ENCODE measurements at regions of chr1 and their contacts with region 1.

Region 1: GRCh38 chr1:171485375-171486047 is at the start of gene PRRC2C:
- DNase-seq: peak; percentile 96
- H3K4me3 Mint-ChIP-seq: peak within 1 kb of the TSS; percentile 83
- H3K27ac Mint-ChIP-seq: peak within 1 kb of the TSS; percentile 93
- H3K4me1 Mint-ChIP-seq: peaks cover 43% of the 10 kb centered on the region
- H3K27me3 Mint-ChIP-seq: no peaks in the 10 kb centered on the region
- total RNA-seq, gene PRRC2C: 191 to 205 TPM

Region 2: GRCh38 chr1:170531758-170532657 is 953.5 kb before region 1 on chr1 and contains the start of gene GORAB:
- CTCF ChIA-PET with region 1: no interaction called
- POLR2A ChIA-PET with region 1: no interaction called
- intact Hi-C with region 1: loop called (anchors 10 kb)
- DNase-seq: peak; percentile 93
- H3K4me3 Mint-ChIP-seq: no peak within 1 kb of the TSS
- H3K27ac Mint-ChIP-seq: no peak within 1 kb of the TSS
- H3K4me1 Mint-ChIP-seq: peaks cover 15% of the 10 kb centered on the region
- H3K27me3 Mint-ChIP-seq: no peaks in the 10 kb centered on the region
- total RNA-seq, gene GORAB: 8.5 to 9.0 TPM

Region 3: GRCh38 chr1:171422511-171422910 is 63.0 kb before region 1 on chr1:
- CTCF ChIA-PET with region 1: interaction called, 4 read pairs
- POLR2A ChIA-PET with region 1: no interaction called
- intact Hi-C with region 1: loop called (anchors 5 kb)
- DNase-seq: no peak
- H3K4me3 Mint-ChIP-seq: no peak overlapping the region
- H3K27ac Mint-ChIP-seq: no peak overlapping the region
- H3K4me1 Mint-ChIP-seq: peaks cover 31% of the 10 kb centered on the region
- H3K27me3 Mint-ChIP-seq: no peaks in the 10 kb centered on the region

Region 4: DNA sequence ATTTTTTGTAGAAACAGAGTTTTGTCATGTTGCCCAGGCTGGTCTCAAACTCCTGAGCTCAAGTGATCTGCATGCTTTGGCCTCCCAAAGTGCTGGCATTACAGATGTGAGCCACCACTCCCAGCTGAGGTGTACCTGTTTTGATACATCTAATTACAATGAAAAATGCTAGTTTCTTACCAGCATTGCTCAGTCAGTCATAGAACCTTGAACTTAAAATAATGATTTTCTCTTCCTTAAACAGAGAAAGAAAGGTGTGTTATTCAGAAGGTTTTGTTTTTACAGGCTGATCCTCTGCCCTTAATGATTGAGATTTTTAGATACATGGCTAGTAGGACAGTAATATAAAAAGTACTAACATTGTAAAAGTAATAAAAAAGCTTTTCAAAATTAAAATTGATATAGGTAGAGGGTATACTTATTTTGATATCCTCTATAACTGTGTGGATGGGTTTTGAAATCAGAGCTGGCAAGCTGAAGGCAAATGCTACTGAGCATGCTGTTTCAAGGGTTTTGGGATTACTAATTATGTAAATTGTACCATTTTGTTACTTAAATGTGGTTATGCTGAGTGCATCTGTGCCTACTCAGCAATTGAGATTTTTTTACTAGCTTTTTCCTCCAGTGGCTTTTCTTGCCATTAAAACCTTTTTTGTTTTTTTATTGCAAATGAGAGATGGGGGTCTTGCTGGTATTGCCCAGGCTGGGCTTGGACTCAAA is 16.0 kb after region 1 on chr1:
- CTCF ChIA-PET with region 1: interaction called, 39 read pairs
- POLR2A ChIA-PET with region 1: interaction called, 24 read pairs
- intact Hi-C with region 1: loop called (anchors 1 kb)
- DNase-seq: peak; percentile 25
- H3K4me3 Mint-ChIP-seq: no peak overlapping the region
- H3K27ac Mint-ChIP-seq: peak overlapping the region; percentile 85
- H3K4me1 Mint-ChIP-seq: peaks cover 89% of the 10 kb centered on the region
- H3K27me3 Mint-ChIP-seq: no peaks in the 10 kb centered on the region

Region 5: DNA sequence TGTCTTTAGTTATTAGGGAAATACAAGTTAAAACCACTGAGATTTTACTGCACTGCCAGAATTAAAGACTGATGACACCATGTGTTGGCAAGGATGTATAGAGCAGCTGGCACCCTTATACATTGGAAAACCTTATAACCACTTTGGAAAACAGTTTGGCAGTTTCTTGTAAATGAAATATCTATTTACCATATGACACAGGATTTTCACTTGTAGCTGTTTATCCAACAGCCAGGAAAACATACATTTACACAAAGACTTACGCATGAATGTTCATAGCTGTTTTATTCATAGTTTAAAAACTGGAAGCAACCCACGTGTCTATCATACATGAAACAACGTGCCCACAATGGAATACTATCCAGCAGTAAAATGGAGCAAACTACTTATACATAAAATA is 45.2 kb after region 1 on chr1:
- CTCF ChIA-PET with region 1: interaction called, 21 read pairs
- POLR2A ChIA-PET with region 1: interaction called, 8 read pairs
- intact Hi-C with region 1: no loop called
- DNase-seq: no peak
- H3K4me3 Mint-ChIP-seq: no peak overlapping the region
- H3K27ac Mint-ChIP-seq: no peak overlapping the region
- H3K4me1 Mint-ChIP-seq: peaks cover 4% of the 10 kb centered on the region
- H3K27me3 Mint-ChIP-seq: no peaks in the 10 kb centered on the region

Region 6: DNA sequence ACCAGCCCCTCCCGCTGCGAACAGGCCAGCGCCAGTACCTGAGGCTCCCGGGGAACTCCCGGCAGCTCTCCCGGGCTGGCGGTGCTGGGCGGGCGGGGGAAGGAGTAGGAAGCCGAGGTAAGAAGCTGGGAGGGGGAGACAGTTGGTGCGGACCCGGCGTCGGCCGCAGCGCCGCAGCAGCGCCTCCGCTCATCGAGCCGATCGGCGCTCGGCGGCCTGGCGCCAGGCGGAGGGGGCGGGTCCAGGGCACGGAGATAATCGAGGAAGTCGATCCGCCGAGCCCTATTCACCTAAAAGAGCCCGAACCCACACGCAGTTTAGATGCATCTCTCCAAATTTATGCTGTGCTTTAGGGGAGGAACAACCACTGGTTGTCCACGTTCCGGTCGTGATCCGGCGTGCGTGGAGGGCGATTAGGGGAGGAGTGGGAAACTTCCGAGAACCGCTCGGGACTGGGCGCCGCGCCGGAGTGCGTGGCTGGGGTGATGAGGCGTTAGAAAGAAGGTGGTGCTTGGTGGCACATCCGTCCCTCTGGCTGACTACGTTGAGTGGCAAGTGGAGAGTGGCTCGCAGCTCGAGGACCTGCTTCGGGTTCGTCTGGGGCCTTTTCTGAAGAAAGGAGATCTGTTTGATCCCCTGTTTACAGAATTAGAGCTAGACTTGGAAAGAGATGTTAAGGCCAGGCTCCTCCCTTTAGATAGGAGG is 256.5 kb after region 1 on chr1 and contains the start of gene VAMP4:
- CTCF ChIA-PET with region 1: interaction called, 7 read pairs
- POLR2A ChIA-PET with region 1: interaction called, 9 read pairs
- intact Hi-C with region 1: loop called (anchors 1 kb)
- DNase-seq: peak; percentile 92
- H3K4me3 Mint-ChIP-seq: peak within 1 kb of the TSS; percentile 99
- H3K27ac Mint-ChIP-seq: peak within 1 kb of the TSS; percentile 100
- H3K4me1 Mint-ChIP-seq: peaks cover 47% of the 10 kb centered on the region
- H3K27me3 Mint-ChIP-seq: no peaks in the 10 kb centered on the region
- total RNA-seq, gene VAMP4: 13.2 to 14.2 TPM

Measured in activated CD4-positive, alpha-beta memory T cell treated with anti-CD3 and anti-CD28 coated beads for 36 hours (primary cell).